ENCODE measurements at regions of chr19 and their contacts with region 1.

Region 1: GRCh38 chr19:47243776-47244547 is 12.4 kb upstream of the CCDC9 start:
- DNase-seq: peak; percentile 96 to 98
- ATAC-seq: peak; percentile 94
- H3K4me3 ChIP-seq: peak overlapping the region in 1 of 2 donors; percentile 30
- H3K27ac ChIP-seq: peak overlapping the region in 1 of 2 donors; percentile 89
- H3K4me1 ChIP-seq: no peaks in the 10 kb centered on the region
- H3K27me3 ChIP-seq: no peaks in the 10 kb centered on the region

Region 2: GRCh38 chr19:47075179-47075810 is 168.7 kb before region 1 on chr19:
- intact Hi-C with region 1: loop called in 1 of 2 experiments (anchors 10 kb)
- DNase-seq: no peak
- ATAC-seq: no peak
- H3K4me3 ChIP-seq: no peak overlapping the region
- H3K27ac ChIP-seq: no peak overlapping the region
- H3K4me1 ChIP-seq: no peaks in the 10 kb centered on the region
- H3K27me3 ChIP-seq: no peaks in the 10 kb centered on the region

Region 3: GRCh38 chr19:47152224-47153017 is 91.5 kb before region 1 on chr19:
- intact Hi-C with region 1: loop called (anchors 1 to 2 kb)
- DNase-seq: no peak
- ATAC-seq: no peak
- H3K4me3 ChIP-seq: no peak overlapping the region
- H3K27ac ChIP-seq: no peak overlapping the region
- H3K4me1 ChIP-seq: no peaks in the 10 kb centered on the region
- H3K27me3 ChIP-seq: no peaks in the 10 kb centered on the region

Region 4: GRCh38 chr19:47190167-47190727 is 53.7 kb before region 1 on chr19:
- intact Hi-C with region 1: loop called in 1 of 2 experiments (anchors 10 kb)
- DNase-seq: peak; percentile 86 to 87
- ATAC-seq: peak; percentile 66
- H3K4me3 ChIP-seq: no peak overlapping the region
- H3K27ac ChIP-seq: peak overlapping the region; percentile 69 to 96
- H3K4me1 ChIP-seq: no peaks in the 10 kb centered on the region
- H3K27me3 ChIP-seq: no peaks in the 10 kb centered on the region

Region 5: DNA sequence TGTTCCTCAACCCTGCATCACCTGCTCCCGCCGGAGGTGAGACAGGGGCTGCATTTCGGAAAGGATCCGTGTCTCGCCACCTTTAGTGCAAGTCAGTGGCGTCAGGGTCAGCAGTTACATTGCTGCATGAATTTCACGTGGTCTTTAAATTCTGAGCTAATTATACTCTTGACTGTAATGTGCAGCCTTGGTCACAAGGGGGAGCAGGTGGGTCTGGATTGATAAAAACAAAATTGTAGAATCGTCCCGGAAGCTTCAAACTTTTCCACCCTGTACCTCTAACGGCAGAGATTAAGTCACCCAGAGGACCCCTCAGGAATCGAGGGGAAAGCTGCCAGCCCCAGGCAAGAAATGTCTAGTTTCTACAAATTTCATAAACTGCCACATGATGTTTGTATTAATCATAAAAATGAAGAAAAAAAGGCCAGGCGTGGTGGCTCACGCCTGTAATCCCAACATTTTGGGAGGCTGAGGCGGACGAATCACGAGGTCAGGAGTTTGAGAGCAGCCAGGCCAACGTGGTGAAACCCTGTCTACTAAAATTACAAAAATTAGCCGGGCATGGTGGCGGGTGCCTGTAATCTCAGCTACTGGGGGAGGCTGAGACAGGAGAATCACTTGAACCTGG is 33.2 kb before region 1 on chr19:
- intact Hi-C with region 1: loop called (anchors 1 to 5 kb)
- DNase-seq: peak in 1 of 2 donors; percentile 83
- ATAC-seq: peak; percentile 86
- H3K4me3 ChIP-seq: no peak overlapping the region
- H3K27ac ChIP-seq: no peak overlapping the region
- H3K4me1 ChIP-seq: no peaks in the 10 kb centered on the region
- H3K27me3 ChIP-seq: no peaks in the 10 kb centered on the region

Region 6: DNA sequence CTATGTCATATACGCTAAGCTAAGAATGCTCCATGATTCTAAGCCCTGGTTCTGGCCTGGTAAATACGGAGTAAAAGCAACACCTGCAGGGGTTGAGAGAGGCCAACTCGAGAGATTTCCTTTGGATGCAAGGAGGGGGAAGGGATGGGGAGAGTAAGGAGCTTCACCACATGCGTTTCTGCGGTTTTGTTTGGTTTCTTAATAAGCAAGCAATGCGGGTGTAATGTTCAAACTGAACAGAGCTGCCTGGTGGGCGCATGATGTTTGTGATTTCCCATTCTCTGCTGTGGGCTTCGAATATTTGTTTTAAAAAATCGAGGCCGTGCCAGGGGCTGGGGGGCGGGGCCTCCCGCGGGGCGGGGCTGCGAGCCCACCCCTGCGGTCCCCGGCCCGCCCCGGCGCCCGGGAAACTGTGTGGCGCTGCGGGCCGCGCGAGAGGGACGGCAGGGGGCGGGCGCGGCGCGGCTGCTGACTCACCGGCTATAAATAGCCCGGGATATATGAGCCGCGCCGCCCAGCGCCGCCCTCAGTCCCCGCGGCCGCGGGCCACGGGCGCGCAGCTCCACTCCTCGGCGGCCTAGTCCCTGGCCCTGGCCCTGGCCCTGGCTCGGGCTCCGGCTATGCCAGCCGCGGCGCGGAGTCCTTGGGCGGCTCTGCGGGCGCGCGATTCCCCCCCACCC is 18.1 kb before region 1 on chr19:
- intact Hi-C with region 1: loop called in 1 of 2 experiments (anchors 2 kb)
- DNase-seq: peak; percentile 91 to 96
- ATAC-seq: peak; percentile 90
- H3K4me3 ChIP-seq: peak overlapping the region; percentile 24 to 41
- H3K27ac ChIP-seq: peak overlapping the region; percentile 94 to 99
- H3K4me1 ChIP-seq: no peaks in the 10 kb centered on the region
- H3K27me3 ChIP-seq: peaks cover 0 to 2% of the 10 kb centered on the region in 2 donors

Measured in aorta (tissue), 5 donors.